Naive thymus-derived CD4-positive, alpha-beta T cell (primary cell): ENCODE measurements at regions of chr1 and their contacts with region 1.

Region 1: DNA sequence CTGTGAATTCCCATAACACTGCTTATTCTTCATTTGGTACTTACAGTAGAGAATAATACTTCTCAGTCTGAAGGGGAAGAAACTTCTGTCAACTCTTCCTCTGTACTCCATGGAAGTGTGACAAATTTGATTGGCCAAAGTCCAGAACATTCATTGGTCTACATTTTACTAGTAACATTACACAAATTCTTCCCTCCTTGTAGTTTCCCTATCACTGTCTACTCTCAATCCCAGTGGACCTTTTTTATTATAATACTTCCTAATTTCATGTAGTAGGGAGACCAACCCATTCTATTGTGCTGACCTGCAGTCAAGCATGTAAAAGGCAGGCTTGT is 74.7 kb downstream of the ALG6 start:
- DNase-seq: no peak
- ATAC-seq: no peak
- H3K4me3 ChIP-seq: no peak overlapping the region
- H3K4me3 Mint-ChIP-seq: no peak overlapping the region
- H3K27ac ChIP-seq: no peak overlapping the region
- H3K27ac Mint-ChIP-seq: no peak overlapping the region
- H3K4me1 ChIP-seq: no peaks in the 10 kb centered on the region
- H3K4me1 Mint-ChIP-seq: peaks cover 0 to 2% (median 0%) of the 10 kb centered on the region in 7 donors
- H3K27me3 ChIP-seq: no peaks in the 10 kb centered on the region
- H3K27me3 Mint-ChIP-seq: no peaks in the 10 kb centered on the region

Region 2: GRCh38 chr1:62573675-62574074 is 868.4 kb before region 1 on chr1:
- CTCF ChIA-PET with region 1: no interaction called
- POLR2A ChIA-PET with region 1: no interaction called
- intact Hi-C with region 1: no loop called
- DNase-seq: no peak
- ATAC-seq: no peak
- H3K4me3 ChIP-seq: no peak overlapping the region
- H3K4me3 Mint-ChIP-seq: no peak overlapping the region
- H3K27ac ChIP-seq: no peak overlapping the region
- H3K27ac Mint-ChIP-seq: no peak overlapping the region
- H3K4me1 ChIP-seq: no peaks in the 10 kb centered on the region
- H3K4me1 Mint-ChIP-seq: no peaks in the 10 kb centered on the region
- H3K27me3 ChIP-seq: no peaks in the 10 kb centered on the region
- H3K27me3 Mint-ChIP-seq: no peaks in the 10 kb centered on the region

Region 3: GRCh38 chr1:62841587-62842169 is 600.4 kb before region 1 on chr1:
- CTCF ChIA-PET with region 1: interaction called, 5 read pairs
- POLR2A ChIA-PET with region 1: no interaction called
- intact Hi-C with region 1: loop called (anchors 1 to 2 kb)
- DNase-seq: peak in 7 of 9 donors; percentile 10 to 56 (median 40)
- ATAC-seq: peak; percentile 67
- H3K4me3 ChIP-seq: no peak overlapping the region
- H3K4me3 Mint-ChIP-seq: no peak overlapping the region
- H3K27ac ChIP-seq: no peak overlapping the region
- H3K27ac Mint-ChIP-seq: no peak overlapping the region
- H3K4me1 ChIP-seq: no peaks in the 10 kb centered on the region
- H3K4me1 Mint-ChIP-seq: no peaks in the 10 kb centered on the region
- H3K27me3 ChIP-seq: no peaks in the 10 kb centered on the region
- H3K27me3 Mint-ChIP-seq: no peaks in the 10 kb centered on the region

Region 4: GRCh38 chr1:62962901-62963776 is 479.0 kb before region 1 on chr1:
- CTCF ChIA-PET with region 1: no interaction called
- POLR2A ChIA-PET with region 1: no interaction called
- intact Hi-C with region 1: loop called in 1 of 2 experiments (anchors 5 kb)
- DNase-seq: no peak
- ATAC-seq: no peak
- H3K4me3 ChIP-seq: no peak overlapping the region
- H3K4me3 Mint-ChIP-seq: no peak overlapping the region
- H3K27ac ChIP-seq: no peak overlapping the region
- H3K27ac Mint-ChIP-seq: no peak overlapping the region
- H3K4me1 ChIP-seq: no peaks in the 10 kb centered on the region
- H3K4me1 Mint-ChIP-seq: peaks cover 0 to 2% (median 0%) of the 10 kb centered on the region in 7 donors
- H3K27me3 ChIP-seq: no peaks in the 10 kb centered on the region
- H3K27me3 Mint-ChIP-seq: peaks cover 12 to 28% (median 22%) of the 10 kb centered on the region in 5 donors

Region 5: DNA sequence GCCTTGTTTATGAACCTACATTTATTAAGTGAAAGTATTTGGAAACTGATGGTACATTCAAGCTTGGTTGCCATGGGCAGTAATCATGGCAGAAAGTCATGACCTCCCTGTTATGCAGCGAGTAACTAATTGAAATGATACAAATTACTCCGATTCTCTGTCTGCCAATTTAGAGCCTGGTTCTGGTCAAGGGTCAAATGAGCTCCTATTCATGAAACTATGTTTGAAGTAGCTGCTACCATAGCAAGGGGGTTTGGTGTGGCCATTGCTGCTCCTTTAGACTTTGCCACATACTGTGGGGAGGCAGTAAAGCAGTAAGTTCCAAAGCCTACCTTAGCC is 307.0 kb before region 1 on chr1:
- CTCF ChIA-PET with region 1: no interaction called
- POLR2A ChIA-PET with region 1: no interaction called
- intact Hi-C with region 1: no loop called
- DNase-seq: no peak
- ATAC-seq: no peak
- H3K4me3 ChIP-seq: no peak overlapping the region
- H3K4me3 Mint-ChIP-seq: no peak overlapping the region
- H3K27ac ChIP-seq: no peak overlapping the region
- H3K27ac Mint-ChIP-seq: no peak overlapping the region
- H3K4me1 ChIP-seq: no peaks in the 10 kb centered on the region
- H3K4me1 Mint-ChIP-seq: no peaks in the 10 kb centered on the region
- H3K27me3 ChIP-seq: no peaks in the 10 kb centered on the region
- H3K27me3 Mint-ChIP-seq: peaks cover 9 to 32% (median 16%) of the 10 kb centered on the region in 5 donors

Region 6: GRCh38 chr1:63189677-63190076 is 252.4 kb before region 1 on chr1:
- CTCF ChIA-PET with region 1: interaction called, 4 read pairs
- POLR2A ChIA-PET with region 1: no interaction called
- intact Hi-C with region 1: loop called in 1 of 2 experiments (anchors 5 kb)
- DNase-seq: no peak
- ATAC-seq: no peak
- H3K4me3 ChIP-seq: no peak overlapping the region
- H3K4me3 Mint-ChIP-seq: no peak overlapping the region
- H3K27ac ChIP-seq: no peak overlapping the region
- H3K27ac Mint-ChIP-seq: no peak overlapping the region
- H3K4me1 ChIP-seq: no peaks in the 10 kb centered on the region
- H3K4me1 Mint-ChIP-seq: no peaks in the 10 kb centered on the region
- H3K27me3 ChIP-seq: no peaks in the 10 kb centered on the region
- H3K27me3 Mint-ChIP-seq: peaks cover 0 to 11% (median 9%) of the 10 kb centered on the region in 5 donors

Region 7: GRCh38 chr1:63305043-63305442 is 137.1 kb before region 1 on chr1:
- CTCF ChIA-PET with region 1: no interaction called
- POLR2A ChIA-PET with region 1: no interaction called
- intact Hi-C with region 1: no loop called
- DNase-seq: no peak
- ATAC-seq: no peak
- H3K4me3 ChIP-seq: no peak overlapping the region
- H3K4me3 Mint-ChIP-seq: no peak overlapping the region
- H3K27ac ChIP-seq: no peak overlapping the region
- H3K27ac Mint-ChIP-seq: no peak overlapping the region
- H3K4me1 ChIP-seq: no peaks in the 10 kb centered on the region
- H3K4me1 Mint-ChIP-seq: no peaks in the 10 kb centered on the region
- H3K27me3 ChIP-seq: no peaks in the 10 kb centered on the region
- H3K27me3 Mint-ChIP-seq: peaks cover 33 to 72% (median 54%) of the 10 kb centered on the region in 5 donors

Region 8: GRCh38 chr1:63316984-63317816 is 124.9 kb before region 1 on chr1:
- CTCF ChIA-PET with region 1: no interaction called
- POLR2A ChIA-PET with region 1: no interaction called
- intact Hi-C with region 1: loop called (anchors 1 kb)
- DNase-seq: peak in 5 of 9 donors; percentile 14 to 74 (median 22)
- ATAC-seq: peak; percentile 73
- H3K4me3 ChIP-seq: peak overlapping the region; percentile 25
- H3K4me3 Mint-ChIP-seq: peak overlapping the region; percentile 12 to 83 (median 67)
- H3K27ac ChIP-seq: no peak overlapping the region
- H3K27ac Mint-ChIP-seq: peak overlapping the region in 3 of 9 donors; percentile 39 to 86 (median 79)
- H3K4me1 ChIP-seq: peaks cover 0 to 8% of the 10 kb centered on the region in 2 donors
- H3K4me1 Mint-ChIP-seq: peaks cover 7 to 49% (median 34%) of the 10 kb centered on the region in 7 donors
- H3K27me3 ChIP-seq: peaks cover 18 to 60% of the 10 kb centered on the region in 2 donors
- H3K27me3 Mint-ChIP-seq: peaks cover 75 to 79% (median 76%) of the 10 kb centered on the region in 5 donors

Region 9: GRCh38 chr1:63327417-63328139 is 114.5 kb before region 1 on chr1:
- CTCF ChIA-PET with region 1: no interaction called
- POLR2A ChIA-PET with region 1: no interaction called
- intact Hi-C with region 1: loop called in 1 of 2 experiments (anchors 2 kb)
- DNase-seq: peak in 5 of 9 donors; percentile 17 to 68 (median 25)
- ATAC-seq: peak; percentile 52
- H3K4me3 ChIP-seq: no peak overlapping the region
- H3K4me3 Mint-ChIP-seq: peak overlapping the region in 7 of 10 donors; percentile 11 to 53 (median 32)
- H3K27ac ChIP-seq: no peak overlapping the region
- H3K27ac Mint-ChIP-seq: peak overlapping the region in 7 of 9 donors; percentile 33 to 77 (median 50)
- H3K4me1 ChIP-seq: peaks cover 11 to 15% of the 10 kb centered on the region in 2 donors
- H3K4me1 Mint-ChIP-seq: peaks cover 9 to 48% (median 36%) of the 10 kb centered on the region in 7 donors
- H3K27me3 ChIP-seq: peaks cover 39 to 65% of the 10 kb centered on the region in 2 donors
- H3K27me3 Mint-ChIP-seq: peaks cover 68 to 79% (median 79%) of the 10 kb centered on the region in 5 donors

Region 10: DNA sequence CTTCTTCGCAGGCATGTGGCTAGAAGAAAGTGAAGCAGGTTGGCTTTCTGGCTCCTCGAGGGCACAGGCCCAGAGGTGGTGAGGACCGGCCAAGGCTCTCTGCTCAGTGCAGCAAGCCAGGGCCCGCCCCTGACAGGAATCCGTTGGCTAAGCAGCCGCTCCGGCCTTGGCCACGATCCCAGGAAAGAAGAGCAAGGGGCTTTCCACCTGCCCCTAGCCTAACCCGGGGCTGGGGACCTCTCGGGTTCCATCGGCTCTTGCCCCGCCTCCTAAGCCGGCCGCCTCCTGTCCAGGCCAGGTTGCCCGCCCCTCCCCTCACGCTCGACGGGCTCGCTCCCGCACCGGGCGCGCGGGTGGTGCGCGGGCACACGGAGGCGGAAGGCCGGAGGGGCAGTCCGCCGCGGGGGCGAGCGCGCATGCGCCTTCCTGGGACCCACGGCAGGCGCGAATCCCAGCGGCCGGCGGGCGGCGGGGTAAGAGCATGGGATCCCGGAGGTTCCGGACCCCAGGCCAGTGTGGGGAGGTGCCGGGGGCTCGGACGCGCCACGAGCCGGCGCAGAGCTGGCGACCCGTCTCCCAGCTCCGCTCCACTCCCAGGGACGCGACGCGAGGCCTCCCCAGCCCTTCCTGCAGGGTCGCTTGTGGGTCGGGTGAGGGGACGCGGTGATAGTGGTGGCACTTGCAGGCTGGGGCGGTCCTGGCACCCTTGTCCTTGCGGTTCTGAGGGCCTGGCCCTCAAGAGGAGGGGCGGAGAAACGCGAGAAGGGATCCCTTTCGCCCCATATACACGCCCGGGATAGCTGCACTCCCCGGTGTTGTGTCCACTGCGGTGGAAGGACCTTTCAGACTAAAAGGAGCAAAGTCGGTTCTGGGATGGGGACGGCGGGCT is 74.6 kb before region 1 on chr1 and contains the start of gene ALG6:
- CTCF ChIA-PET with region 1: no interaction called
- POLR2A ChIA-PET with region 1: no interaction called
- intact Hi-C with region 1: loop called in 1 of 2 experiments (anchors 2 kb)
- DNase-seq: peak; percentile 66 to 98 (median 84)
- ATAC-seq: peak; percentile 99
- H3K4me3 ChIP-seq: peak within 1 kb of the TSS; percentile 95
- H3K4me3 Mint-ChIP-seq: peak within 1 kb of the TSS; percentile 91 to 99 (median 94)
- H3K27ac ChIP-seq: peak within 1 kb of the TSS; percentile 72
- H3K27ac Mint-ChIP-seq: peak within 1 kb of the TSS; percentile 79 to 93 (median 84)
- H3K4me1 ChIP-seq: peaks cover 0 to 7% of the 10 kb centered on the region in 2 donors
- H3K4me1 Mint-ChIP-seq: peaks cover 23 to 46% (median 36%) of the 10 kb centered on the region in 7 donors
- H3K27me3 ChIP-seq: no peaks in the 10 kb centered on the region
- H3K27me3 Mint-ChIP-seq: peaks cover 0 to 7% (median 0%) of the 10 kb centered on the region in 5 donors
- total RNA-seq, gene ALG6: 16.1 to 29.8 (median 27.3) TPM